ENCODE measurements at regions of chr5 and their contacts with region 1.

Region 1: GRCh38 chr5:97183100-97183929 is at the start of gene RIOK2:
- DNase-seq: peak; percentile 96
- ATAC-seq: peak; percentile 98
- total RNA-seq, gene RIOK2: 20.9 to 22.5 TPM

Region 2: DNA sequence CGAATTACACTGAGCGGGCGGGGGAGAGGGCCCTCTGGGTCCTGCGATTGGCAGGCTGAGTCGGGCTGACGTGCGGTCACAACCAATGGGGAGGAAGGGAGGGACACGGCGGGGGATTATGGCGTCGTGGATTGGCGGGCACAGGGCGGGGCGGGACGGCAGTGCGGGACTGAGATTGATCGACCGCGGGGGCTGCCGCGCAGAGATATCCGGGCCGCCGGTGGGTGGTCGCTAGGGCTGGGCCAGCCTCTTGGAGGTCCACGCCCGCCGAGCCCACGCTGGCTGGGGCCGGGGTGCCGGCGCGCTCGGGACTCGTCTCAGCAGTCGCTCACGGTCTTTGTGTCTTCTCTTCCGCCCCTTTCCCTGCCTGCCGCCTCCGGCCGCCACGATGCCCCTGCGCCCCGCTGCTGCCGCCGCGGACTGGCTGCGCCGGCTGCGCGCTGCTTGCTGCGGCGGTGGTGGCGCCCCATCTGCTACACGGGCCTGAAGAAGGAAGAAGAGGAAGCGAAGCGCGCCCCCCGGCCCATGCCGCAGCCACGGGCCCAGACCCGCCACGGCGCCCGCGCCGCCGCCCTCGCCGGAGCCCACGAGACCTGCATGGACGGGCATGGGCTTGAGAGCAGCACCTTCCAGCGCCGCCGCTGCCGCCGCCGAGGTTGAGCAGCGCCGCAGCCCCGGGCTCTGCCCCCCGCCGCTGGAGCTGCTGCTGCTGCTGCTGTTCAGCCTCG is 1590.3 kb after region 1 on chr5 and contains the start of gene RGMB:
- intact Hi-C with region 1: loop called in 1 of 2 experiments (anchors 10 kb)
- DNase-seq: peak; percentile 99
- ATAC-seq: peak; percentile 95 to 96
- total RNA-seq, gene RGMB: 15.4 to 15.6 TPM

Measured in left cardiac atrium (tissue), 4 donors.